ENCODE measurements at regions of chr17 and their contacts with region 1.

Region 1: GRCh38 chr17:7351665-7352501 is at the start of gene KCTD11:
- DNase-seq: peak; percentile 91 to 97 (median 94)
- ATAC-seq: peak; percentile 79 to 84 (median 80)
- H3K4me3 ChIP-seq: peak within 1 kb of the TSS; percentile 82 to 94 (median 88)
- H3K27ac ChIP-seq: peak within 1 kb of the TSS; percentile 95 to 99 (median 98)
- H3K4me1 ChIP-seq: peaks cover 7 to 21% (median 8%) of the 10 kb centered on the region in 3 donors
- H3K27me3 ChIP-seq: no peaks in the 10 kb centered on the region
- CTCF ChIP-seq: no peak
- total RNA-seq, gene KCTD11: 3.4 to 6.6 (median 4.3) TPM

Region 2: DNA sequence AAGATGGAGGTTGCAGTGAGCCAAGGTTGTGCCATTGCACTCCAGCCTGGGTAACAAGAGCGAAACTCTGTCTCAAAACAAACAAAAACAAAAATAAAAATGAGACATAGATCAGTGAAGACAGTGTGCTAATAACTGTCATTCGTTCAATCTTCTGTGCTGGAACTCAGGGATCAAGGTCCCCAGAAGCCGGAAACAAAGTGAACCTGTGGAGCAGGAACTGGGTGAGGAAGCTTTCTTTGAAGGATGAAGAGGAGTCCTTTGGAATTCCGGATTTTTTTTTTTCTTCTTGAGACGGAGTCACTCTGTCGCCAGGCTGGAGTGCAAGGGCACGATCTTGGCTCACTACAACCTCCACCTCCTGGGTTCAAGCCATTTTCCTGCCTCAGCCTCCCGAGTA is 72.4 kb before region 1 on chr17:
- intact Hi-C with region 1: loop called in 1 of 3 experiments (anchors 5 kb)
- DNase-seq: no peak
- ATAC-seq: no peak
- H3K4me3 ChIP-seq: no peak overlapping the region
- H3K27ac ChIP-seq: no peak overlapping the region
- H3K4me1 ChIP-seq: peaks cover 5 to 14% (median 9%) of the 10 kb centered on the region in 3 donors
- H3K27me3 ChIP-seq: no peaks in the 10 kb centered on the region
- CTCF ChIP-seq: no peak

Region 3: GRCh38 chr17:7435221-7435675 is 83.4 kb after region 1 on chr17 and contains the start of gene TMEM102:
- intact Hi-C with region 1: loop called in 2 of 3 experiments (anchors 10 kb)
- DNase-seq: peak; percentile 97 to 99 (median 98)
- ATAC-seq: peak; percentile 78 to 90 (median 86)
- H3K4me3 ChIP-seq: peak within 1 kb of the TSS; percentile 36 to 70 (median 46)
- H3K27ac ChIP-seq: peak within 1 kb of the TSS; percentile 86 to 97 (median 94)
- H3K4me1 ChIP-seq: peaks cover 5 to 12% (median 11%) of the 10 kb centered on the region in 3 donors
- H3K27me3 ChIP-seq: no peaks in the 10 kb centered on the region
- CTCF ChIP-seq: no peak
- total RNA-seq, gene TMEM102: 2.4 to 7.8 (median 3.6) TPM

Region 4: DNA sequence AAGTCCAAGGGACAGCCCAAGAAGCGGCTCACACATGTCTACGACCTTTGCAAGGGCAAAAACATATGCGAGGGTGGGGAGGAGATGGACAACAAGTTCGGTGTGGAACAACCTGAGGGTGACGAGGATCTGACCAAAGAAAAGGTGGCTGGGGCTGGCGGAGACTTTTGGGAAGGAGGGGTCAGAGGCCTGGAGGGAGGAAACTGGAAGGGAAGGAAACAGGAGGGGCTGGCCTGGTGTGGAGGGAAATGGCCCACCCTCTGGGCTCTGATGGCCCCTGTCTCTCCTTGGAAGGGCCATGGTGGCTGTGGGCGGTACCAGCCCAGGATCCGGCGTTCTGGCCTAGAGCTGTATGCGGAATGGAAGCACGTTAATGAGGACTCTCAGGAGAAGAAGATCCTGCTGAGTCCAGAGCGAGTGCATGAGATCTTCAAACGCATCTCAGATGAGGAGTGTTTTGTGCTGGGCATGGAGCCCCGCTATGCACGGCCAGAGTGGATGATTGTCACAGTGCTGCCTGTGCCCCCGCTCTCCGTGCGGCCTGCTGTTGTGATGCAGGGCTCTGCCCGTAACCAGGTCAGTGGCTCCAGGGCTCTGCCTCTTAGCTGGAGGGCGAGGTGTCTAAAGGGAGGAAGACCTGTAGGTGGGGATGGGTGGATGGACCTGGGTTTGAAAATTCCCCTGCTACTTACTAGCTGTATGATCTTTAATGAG is 144.7 kb after region 1 on chr17:
- intact Hi-C with region 1: no loop called
- DNase-seq: no peak
- ATAC-seq: no peak
- H3K4me3 ChIP-seq: no peak overlapping the region
- H3K27ac ChIP-seq: no peak overlapping the region
- H3K4me1 ChIP-seq: no peaks in the 10 kb centered on the region
- H3K27me3 ChIP-seq: no peaks in the 10 kb centered on the region
- CTCF ChIP-seq: no peak

Region 5: GRCh38 chr17:7561028-7561575 is 209.2 kb after region 1 on chr17:
- intact Hi-C with region 1: loop called in 1 of 3 experiments (anchors 10 kb)
- DNase-seq: peak; percentile 91 to 97 (median 95)
- ATAC-seq: peak; percentile 78 to 85 (median 80)
- H3K4me3 ChIP-seq: peak overlapping the region; percentile 80 to 97 (median 92)
- H3K27ac ChIP-seq: peak overlapping the region; percentile 79 to 94 (median 88)
- H3K4me1 ChIP-seq: peaks cover 25 to 43% (median 30%) of the 10 kb centered on the region in 3 donors
- H3K27me3 ChIP-seq: no peaks in the 10 kb centered on the region
- CTCF ChIP-seq: peak; percentile 62 to 80 (median 64)

Region 6: DNA sequence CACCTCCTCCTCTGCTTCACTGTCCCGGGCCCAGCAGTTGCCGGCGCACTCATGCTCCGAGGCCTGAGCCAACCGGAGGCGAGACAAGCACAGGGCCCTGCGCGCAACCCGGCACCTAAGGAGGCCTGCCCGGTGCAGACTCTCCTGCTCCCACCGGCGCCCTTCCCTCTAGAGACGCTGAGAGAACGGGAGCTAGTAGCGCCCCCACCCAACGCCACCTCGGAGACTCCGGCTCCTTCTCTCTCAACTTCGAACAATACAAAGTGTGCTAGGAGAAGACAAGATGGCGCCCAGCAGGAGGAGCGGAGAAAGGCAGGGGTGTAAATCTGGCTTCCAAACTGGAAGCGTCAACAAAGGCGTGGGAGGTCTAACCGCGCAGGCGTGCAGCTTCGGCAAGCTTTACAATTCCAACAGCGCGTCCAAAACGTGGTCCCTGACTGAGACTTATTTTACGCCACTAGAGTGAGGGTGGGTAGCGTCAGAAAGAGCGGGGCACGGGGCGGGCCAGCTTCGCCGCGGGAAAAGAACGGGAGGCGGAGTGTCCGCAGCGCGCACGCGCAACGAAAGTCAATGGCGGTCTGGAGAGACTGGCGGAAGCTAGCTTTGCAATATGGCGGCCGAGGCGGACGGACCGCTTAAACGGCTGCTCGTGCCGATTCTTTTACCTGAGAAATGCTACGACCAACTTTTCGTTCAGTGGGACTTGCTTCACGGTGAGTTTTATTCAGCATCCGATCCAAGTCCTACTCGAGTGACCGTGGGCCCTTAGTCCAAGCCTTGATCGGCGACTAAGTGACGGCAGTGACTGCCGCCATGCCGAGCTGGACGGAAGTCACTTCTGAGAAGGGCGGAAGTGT is 231.6 kb after region 1 on chr17 and contains the start of gene MPDU1:
- intact Hi-C with region 1: loop called in 1 of 3 experiments (anchors 10 kb)
- DNase-seq: peak; percentile 96 to 99 (median 96)
- ATAC-seq: peak; percentile 88 to 92 (median 92)
- H3K4me3 ChIP-seq: peak within 1 kb of the TSS; percentile 32 to 52 (median 47)
- H3K27ac ChIP-seq: peak within 1 kb of the TSS; percentile 86 to 97 (median 95)
- H3K4me1 ChIP-seq: peaks cover 10 to 27% (median 11%) of the 10 kb centered on the region in 3 donors
- H3K27me3 ChIP-seq: no peaks in the 10 kb centered on the region
- CTCF ChIP-seq: no peak
- total RNA-seq, gene MPDU1: 12.3 to 27.1 (median 18.3) TPM

Measured in pancreas (tissue), 10 donors.